ENCODE measurements at regions of chr9 and their contacts with region 1.

Region 1: DNA sequence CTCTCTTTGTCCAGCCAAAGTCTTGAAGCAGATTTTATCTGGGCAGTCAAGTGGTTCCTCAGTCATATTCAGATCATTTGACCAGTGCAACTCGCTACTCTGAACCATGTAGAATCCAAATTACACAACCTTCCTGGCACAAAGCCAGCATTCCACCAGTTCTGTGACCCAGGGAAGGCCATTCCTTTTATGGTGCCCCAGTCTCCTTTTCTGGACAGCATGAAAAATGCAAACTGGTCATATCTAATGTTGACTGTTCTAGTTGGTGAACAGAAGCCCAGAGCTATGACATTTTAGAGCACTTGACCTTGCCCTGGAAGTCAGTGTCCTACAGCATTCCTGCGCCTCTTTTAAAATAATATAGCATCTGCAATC is 364.6 kb downstream of the BRINP1 start:
- DNase-seq: peak; percentile 53 to 86 (median 84)
- ATAC-seq: peak; percentile 92 to 95 (median 94)
- H3K4me3 ChIP-seq: no peak overlapping the region
- H3K27ac ChIP-seq: peak overlapping the region; percentile 47 to 88 (median 72)
- H3K4me1 ChIP-seq: peaks cover 0 to 25% (median 12%) of the 10 kb centered on the region in 12 donors
- H3K27me3 ChIP-seq: no peaks in the 10 kb centered on the region
- CTCF ChIP-seq: no peak
- POLR2A ChIP-seq: no peak

Region 2: DNA sequence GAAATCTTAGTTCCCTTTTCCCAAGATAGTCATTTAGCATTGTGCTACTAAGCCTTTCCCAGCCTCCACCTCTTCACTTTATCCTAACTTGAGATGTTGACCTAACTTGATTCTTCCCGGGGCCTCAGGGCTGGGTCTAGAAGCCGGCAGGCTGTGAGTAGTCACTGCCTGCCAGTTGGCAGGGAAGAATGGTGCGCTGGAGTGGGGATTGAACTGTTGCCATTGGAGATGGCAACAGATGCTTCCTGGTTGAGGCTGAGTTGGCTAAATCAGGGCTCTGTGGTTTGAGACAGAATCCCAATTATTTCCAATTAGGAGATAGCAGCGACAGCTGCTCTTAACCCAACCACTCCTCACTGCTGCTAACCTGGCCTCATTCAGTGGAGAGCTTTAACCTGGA is 21.5 kb after region 1 on chr9:
- intact Hi-C with region 1: loop called in 1 of 10 experiments (anchors 2 kb)
- DNase-seq: peak; percentile 47 to 70 (median 59)
- ATAC-seq: peak; percentile 42 to 78 (median 65)
- H3K4me3 ChIP-seq: no peak overlapping the region
- H3K27ac ChIP-seq: peak overlapping the region; percentile 73 to 91 (median 84)
- H3K4me1 ChIP-seq: peaks cover 0 to 39% (median 17%) of the 10 kb centered on the region in 12 donors
- H3K27me3 ChIP-seq: no peaks in the 10 kb centered on the region
- CTCF ChIP-seq: no peak
- POLR2A ChIP-seq: no peak

Region 3: DNA sequence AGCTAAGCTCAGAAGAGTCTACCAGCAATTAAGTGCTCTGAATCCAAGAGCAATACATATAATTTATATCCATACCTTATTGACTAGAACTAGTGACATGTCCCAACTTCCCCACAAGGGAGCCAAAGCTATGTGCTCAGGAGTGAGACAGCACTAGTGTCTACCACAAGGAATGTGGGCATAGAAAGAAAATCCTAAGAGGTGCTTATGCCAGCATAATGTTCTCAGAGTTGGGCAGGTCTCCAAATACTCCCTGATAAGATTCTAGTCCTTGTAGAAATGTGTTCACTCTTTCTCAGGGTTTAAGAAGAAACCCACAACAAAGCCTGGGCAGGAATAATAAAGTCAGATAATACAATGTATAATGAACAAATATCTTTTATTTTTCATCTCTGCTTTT is 89.5 kb after region 1 on chr9:
- intact Hi-C with region 1: no loop called
- DNase-seq: no peak
- ATAC-seq: peak in 1 of 4 donors; percentile 22
- H3K4me3 ChIP-seq: no peak overlapping the region
- H3K27ac ChIP-seq: no peak overlapping the region
- H3K4me1 ChIP-seq: peaks cover 0 to 5% (median 0%) of the 10 kb centered on the region in 12 donors
- H3K27me3 ChIP-seq: no peaks in the 10 kb centered on the region
- CTCF ChIP-seq: no peak
- POLR2A ChIP-seq: no peak

Measured in heart left ventricle (tissue), 16 donors.